HCT116 (cell line): ENCODE measurements at regions of chr3 and their contacts with region 1.

Region 1: GRCh38 chr3:143951351-143951971 is 20.2 kb upstream of the DIPK2A start:
- DNase-seq: peak; percentile 26
- ATAC-seq: peak; percentile 79
- H3K4me3 ChIP-seq: no peak overlapping the region
- H3K27ac ChIP-seq: no peak overlapping the region
- H3K4me1 ChIP-seq: no peaks in the 10 kb centered on the region
- H3K27me3 ChIP-seq: no peaks in the 10 kb centered on the region
- CTCF ChIP-seq: peak; percentile 51 to 78 (median 66); a peak in 5 of 6 replicates
- POLR2A ChIP-seq: no peak
- RAD21 ChIP-seq: peak; percentile 52

Region 2: DNA sequence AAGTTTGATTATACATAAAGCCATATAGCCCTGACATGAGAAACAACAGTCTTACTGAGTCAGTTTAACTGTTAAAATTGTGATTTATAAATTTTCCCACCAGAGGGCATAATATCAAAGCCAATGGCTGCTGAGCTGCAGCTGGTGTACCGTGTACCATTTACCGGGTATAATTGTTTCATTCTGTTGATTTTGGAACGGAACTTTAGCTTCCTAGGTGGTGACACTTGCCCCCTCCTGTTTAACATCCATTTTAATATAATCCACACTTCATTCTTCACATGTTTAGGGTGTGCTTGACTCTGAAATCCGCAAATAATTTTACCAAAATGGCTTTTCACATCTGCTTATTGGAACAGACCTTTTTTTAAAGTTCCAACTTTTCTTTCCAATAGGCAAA is 176.0 kb before region 1 on chr3:
- CTCF ChIA-PET with region 1: no interaction called
- POLR2A ChIA-PET with region 1: no interaction called
- RAD21 ChIA-PET with region 1: no interaction called
- intact Hi-C with region 1: loop called (anchors 2 kb)
- DNase-seq: peak; percentile 21
- ATAC-seq: peak; percentile 90
- H3K4me3 ChIP-seq: no peak overlapping the region
- H3K27ac ChIP-seq: no peak overlapping the region
- H3K4me1 ChIP-seq: no peaks in the 10 kb centered on the region
- H3K27me3 ChIP-seq: 0 out of 2 replicates have a peak, but pooled peaks cover 5% of the 10 kb centered on the region
- CTCF ChIP-seq: peak; percentile 25 to 60 (median 41); a peak in 4 of 6 replicates
- POLR2A ChIP-seq: no peak
- RAD21 ChIP-seq: peak; percentile 74

Region 3: GRCh38 chr3:143895805-143896204 is 55.7 kb before region 1 on chr3:
- CTCF ChIA-PET with region 1: no interaction called
- POLR2A ChIA-PET with region 1: no interaction called
- RAD21 ChIA-PET with region 1: no interaction called
- intact Hi-C with region 1: loop called (anchors 5 kb)
- DNase-seq: no peak
- ATAC-seq: 0 out of 2 replicates have a peak, but pooled peaks have one; percentile 30
- H3K4me3 ChIP-seq: no peak overlapping the region
- H3K27ac ChIP-seq: no peak overlapping the region
- H3K4me1 ChIP-seq: no peaks in the 10 kb centered on the region
- H3K27me3 ChIP-seq: no peaks in the 10 kb centered on the region
- CTCF ChIP-seq: peak in 2 of 3 experiments; percentile 28 to 39; a peak in 3 of 6 replicates
- POLR2A ChIP-seq: no peak
- RAD21 ChIP-seq: peak; percentile 56

Region 4: GRCh38 chr3:143963946-143964345 is 12.5 kb after region 1 on chr3:
- CTCF ChIA-PET with region 1: no interaction called
- POLR2A ChIA-PET with region 1: no interaction called
- RAD21 ChIA-PET with region 1: no interaction called
- intact Hi-C with region 1: no loop called
- DNase-seq: no peak
- ATAC-seq: no peak
- H3K4me3 ChIP-seq: no peak overlapping the region
- H3K27ac ChIP-seq: no peak overlapping the region
- H3K4me1 ChIP-seq: no peaks in the 10 kb centered on the region
- H3K27me3 ChIP-seq: no peaks in the 10 kb centered on the region
- CTCF ChIP-seq: no peak
- POLR2A ChIP-seq: no peak
- RAD21 ChIP-seq: no peak

Region 5: GRCh38 chr3:143998266-143998665 is 46.8 kb after region 1 on chr3:
- CTCF ChIA-PET with region 1: no interaction called
- POLR2A ChIA-PET with region 1: no interaction called
- RAD21 ChIA-PET with region 1: no interaction called
- intact Hi-C with region 1: no loop called
- DNase-seq: no peak
- ATAC-seq: no peak
- H3K4me3 ChIP-seq: no peak overlapping the region
- H3K27ac ChIP-seq: no peak overlapping the region
- H3K4me1 ChIP-seq: no peaks in the 10 kb centered on the region
- H3K27me3 ChIP-seq: no peaks in the 10 kb centered on the region
- CTCF ChIP-seq: no peak
- POLR2A ChIP-seq: no peak
- RAD21 ChIP-seq: no peak